Activated T-helper 1 cell treated with anti-CD3 and anti-CD28 coated beads, Interleukin-12 subunit alpha, Interleukin-12 subunit beta, Interleukin-2, Interleukin-4 antibody, amounts not matched to agents 30 ng/mL and 10 ng/mL and 1 ng/mL, durations not matched to agents 14 hours and 24 hours and 36 hours (primary cell): ENCODE measurements at regions of chr11 and their contacts with region 1.

Region 1: GRCh38 chr11:124673333-124674167 is at the starts of genes SIAE and SPA17:
- DNase-seq: peak; percentile 86
- H3K4me3 Mint-ChIP-seq: peak within 1 kb of the TSS; percentile 89
- H3K27ac Mint-ChIP-seq: peak within 1 kb of the TSS; percentile 89
- H3K4me1 Mint-ChIP-seq: peaks cover 29% of the 10 kb centered on the region
- H3K27me3 Mint-ChIP-seq: peaks cover 5% of the 10 kb centered on the region
- total RNA-seq, gene SIAE: 4.9 and 5.2 TPM in 2 replicates
- total RNA-seq, gene SPA17: 1.7 and 2.4 TPM in 2 replicates

Region 2: DNA sequence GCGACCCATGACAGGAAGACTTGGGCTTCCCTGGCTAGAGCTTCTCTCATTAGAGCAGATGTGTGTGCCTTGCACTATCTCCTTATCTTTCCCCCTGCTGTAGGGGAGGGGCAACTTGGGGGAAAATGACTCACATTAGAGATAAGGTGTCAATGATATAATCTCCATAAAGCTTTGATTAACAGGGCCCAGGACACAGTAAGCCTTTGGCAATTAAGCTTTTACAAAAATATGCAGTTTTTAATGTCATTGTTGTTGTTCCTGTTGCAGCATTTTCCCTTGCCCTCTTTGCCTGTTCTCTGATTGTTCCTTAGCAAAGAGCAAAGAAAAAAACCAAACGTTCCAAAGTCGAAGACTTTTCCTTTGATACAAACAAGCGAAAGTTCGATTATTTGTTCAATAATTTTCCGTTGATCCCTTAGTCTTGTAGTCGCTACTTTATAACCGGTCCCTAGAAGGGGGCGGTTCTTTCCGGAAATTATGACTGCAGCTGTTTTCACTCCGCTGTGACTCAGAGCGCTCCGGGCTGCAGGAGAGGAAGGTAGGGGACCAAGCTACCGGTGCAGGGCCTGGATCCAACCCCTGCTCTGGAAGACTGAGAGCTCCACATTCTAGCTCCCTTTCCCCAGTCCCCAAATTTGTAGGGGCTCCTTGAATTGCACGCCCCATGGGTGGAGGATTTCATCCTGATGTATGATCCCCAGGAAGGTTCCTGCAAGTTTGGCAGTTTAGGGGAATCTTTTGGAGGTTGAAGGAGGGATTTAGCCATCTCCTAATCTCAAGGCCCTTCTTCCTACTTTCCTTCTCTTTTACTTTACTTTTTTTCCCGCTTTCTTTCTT is 558.4 kb before region 1 on chr11 and contains the start of gene VWA5A:
- intact Hi-C with region 1: loop called (anchors 5 kb)
- DNase-seq: peak; percentile 71
- H3K4me3 Mint-ChIP-seq: peak within 1 kb of the TSS; percentile 94
- H3K27ac Mint-ChIP-seq: peak within 1 kb of the TSS; percentile 92
- H3K4me1 Mint-ChIP-seq: peaks cover 34% of the 10 kb centered on the region
- H3K27me3 Mint-ChIP-seq: peaks cover 7% of the 10 kb centered on the region
- total RNA-seq, gene VWA5A: 7.9 and 8.0 TPM in 2 replicates

Region 3: DNA sequence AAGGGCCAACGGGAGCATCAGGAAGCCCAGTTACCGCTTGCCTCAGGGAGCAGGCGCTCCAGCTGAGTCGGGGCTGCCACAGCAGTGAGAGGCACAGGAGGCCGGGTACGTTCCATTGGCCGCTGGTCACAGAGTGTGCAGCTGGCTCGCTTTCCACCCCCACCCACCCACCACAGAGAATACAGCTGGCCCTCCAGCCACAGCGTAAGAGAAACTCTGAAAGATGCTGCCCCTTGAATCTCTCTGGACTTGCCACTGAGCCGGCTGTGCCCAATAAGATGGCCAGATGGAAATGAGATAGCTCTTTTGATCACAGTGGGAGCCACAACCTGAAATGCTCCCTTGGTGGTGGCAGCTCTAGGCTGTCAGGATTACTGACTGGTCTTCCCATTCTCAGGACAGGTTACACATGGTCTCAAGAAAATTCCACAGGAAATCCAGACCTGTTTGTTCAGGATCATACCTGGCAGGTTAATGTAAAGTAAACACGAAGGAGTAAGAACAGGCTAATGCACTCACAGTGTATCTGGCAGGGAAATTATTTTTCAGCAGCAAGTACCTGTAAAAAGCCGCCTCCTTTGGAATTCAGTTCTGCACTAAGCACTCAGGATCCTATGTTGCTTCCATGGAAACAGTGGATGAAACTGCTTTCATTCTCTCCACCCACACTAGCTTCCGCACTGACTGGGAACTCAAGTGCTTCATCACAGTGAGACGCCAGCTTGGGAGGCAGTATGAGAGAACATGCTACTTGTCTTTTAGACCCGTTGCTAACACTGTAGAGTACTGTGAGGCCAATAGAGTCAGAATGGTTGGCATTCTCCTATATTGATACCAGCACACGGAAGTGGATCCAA is 16.5 kb before region 1 on chr11:
- intact Hi-C with region 1: no loop called
- DNase-seq: no peak
- H3K4me3 Mint-ChIP-seq: no peak overlapping the region
- H3K27ac Mint-ChIP-seq: no peak overlapping the region
- H3K4me1 Mint-ChIP-seq: no peaks in the 10 kb centered on the region
- H3K27me3 Mint-ChIP-seq: no peaks in the 10 kb centered on the region

Region 4: DNA sequence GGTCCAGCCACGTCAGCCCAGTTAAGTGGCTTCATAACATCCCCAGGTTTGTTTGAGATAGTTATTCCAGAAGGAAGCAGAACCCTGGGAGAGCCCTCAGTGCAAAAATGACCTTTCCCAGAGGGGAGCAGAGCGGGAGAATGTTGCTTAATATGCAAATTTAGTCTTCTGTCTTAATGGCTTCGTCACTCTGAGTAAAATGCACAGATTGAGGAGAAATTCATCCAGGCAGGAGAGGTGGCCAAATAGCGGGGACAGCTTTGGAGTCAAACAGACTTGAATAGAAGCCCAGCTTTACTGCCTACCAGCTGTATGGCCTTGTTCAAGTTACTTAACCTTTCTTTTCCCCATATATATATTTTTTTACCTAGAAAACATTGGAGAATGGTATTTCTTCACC is 53.9 kb after region 1 on chr11:
- intact Hi-C with region 1: no loop called
- DNase-seq: no peak
- H3K4me3 Mint-ChIP-seq: no peak overlapping the region
- H3K27ac Mint-ChIP-seq: no peak overlapping the region
- H3K4me1 Mint-ChIP-seq: no peaks in the 10 kb centered on the region
- H3K27me3 Mint-ChIP-seq: peaks cover 15% of the 10 kb centered on the region

Region 5: GRCh38 chr11:124739479-124740276 is 66.1 kb after region 1 on chr11 and contains the start of gene NRGN:
- intact Hi-C with region 1: loop called (anchors 1 kb)
- DNase-seq: peak; percentile 80
- H3K4me3 Mint-ChIP-seq: peak within 1 kb of the TSS; percentile 85
- H3K27ac Mint-ChIP-seq: peak within 1 kb of the TSS; percentile 54
- H3K4me1 Mint-ChIP-seq: peaks cover 25% of the 10 kb centered on the region
- H3K27me3 Mint-ChIP-seq: peaks cover 38% of the 10 kb centered on the region
- total RNA-seq, gene NRGN: 3.9 and 6.1 TPM in 2 replicates

Region 6: DNA sequence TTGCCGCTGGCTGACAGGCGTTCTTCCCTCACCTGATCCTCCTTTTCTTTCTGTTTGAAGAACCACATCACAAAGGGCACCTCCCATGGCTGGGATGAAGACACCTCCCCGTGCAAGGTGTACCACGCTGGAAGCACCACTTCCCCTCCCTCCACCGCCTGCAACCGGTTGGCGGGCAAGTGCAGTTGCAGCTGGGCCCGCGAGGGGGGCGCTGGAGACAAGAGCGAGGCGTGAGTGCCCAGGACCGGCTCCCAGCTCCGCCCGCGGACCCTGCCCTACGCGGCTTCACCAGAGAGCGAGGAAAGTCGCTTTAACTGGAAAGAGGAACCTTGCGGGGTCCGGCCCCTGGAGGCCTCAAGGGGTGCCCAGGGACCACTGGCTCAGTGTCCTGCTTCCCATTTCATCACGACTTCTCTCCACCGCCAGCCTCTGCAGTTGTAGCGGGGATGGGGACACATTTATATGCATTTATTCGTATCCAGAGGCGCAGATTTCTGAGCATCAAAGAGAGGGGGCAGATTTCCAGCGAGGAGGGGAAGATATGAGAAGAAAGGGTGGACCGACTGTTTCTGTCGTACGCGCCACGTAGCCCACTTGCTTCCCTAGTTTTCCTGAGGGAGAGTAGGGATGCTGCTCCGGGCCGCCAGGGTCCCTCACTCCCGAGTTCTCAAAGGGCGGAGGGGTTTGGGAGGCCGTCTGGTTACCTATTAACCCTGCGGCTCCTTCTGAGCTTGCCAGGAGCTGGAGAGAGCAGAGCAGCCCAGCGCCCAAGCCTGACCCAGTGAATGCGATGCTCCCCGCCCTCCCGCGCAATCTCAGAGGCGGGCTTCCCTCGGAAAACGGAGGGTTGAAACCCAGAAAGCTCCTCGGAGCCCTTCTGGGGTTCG is 85.0 kb after region 1 on chr11:
- intact Hi-C with region 1: loop called (anchors 1 kb)
- DNase-seq: peak; percentile 59
- H3K4me3 Mint-ChIP-seq: peak overlapping the region; percentile 61
- H3K27ac Mint-ChIP-seq: no peak overlapping the region
- H3K4me1 Mint-ChIP-seq: peaks cover 19% of the 10 kb centered on the region
- H3K27me3 Mint-ChIP-seq: peaks cover 57% of the 10 kb centered on the region

Region 7: DNA sequence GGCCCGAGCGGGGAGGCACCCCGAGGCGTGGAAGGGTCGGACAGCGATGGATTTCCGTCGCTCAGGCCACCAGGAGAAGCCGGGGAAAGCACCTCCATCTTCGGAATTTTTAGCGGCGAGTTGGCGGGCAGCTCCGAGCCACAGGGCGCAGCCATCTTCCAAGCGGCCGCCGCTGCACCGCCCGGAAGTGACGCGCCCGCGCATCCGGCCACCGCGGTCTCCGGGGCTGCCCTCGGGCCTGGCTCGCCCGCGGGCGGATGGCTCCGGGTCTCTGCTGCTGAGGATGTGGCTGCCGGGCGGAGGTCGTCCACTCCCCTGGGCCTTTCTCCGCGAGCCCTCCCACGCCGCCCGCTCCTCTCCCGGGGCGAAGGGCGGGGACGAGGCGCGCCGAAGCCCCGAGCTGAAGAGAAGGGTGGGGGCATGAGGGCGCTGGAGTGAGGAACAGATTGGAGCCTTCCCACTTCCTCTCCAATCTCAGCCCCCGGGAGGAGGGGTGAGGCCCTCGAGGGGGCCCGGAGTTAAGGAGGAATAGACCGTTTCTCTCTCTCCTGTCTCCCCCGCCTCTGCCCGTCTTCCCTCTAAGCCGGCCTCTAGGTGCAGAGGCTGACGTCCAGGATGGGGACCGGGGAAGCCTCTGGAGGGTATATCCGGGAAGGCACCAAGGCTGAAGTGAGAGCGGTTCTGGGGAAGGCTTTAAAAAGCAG is 126.8 kb after region 1 on chr11 and contains the start of gene MSANTD2:
- intact Hi-C with region 1: loop called (anchors 1 kb)
- DNase-seq: peak; percentile 79
- H3K4me3 Mint-ChIP-seq: peak within 1 kb of the TSS; percentile 91
- H3K27ac Mint-ChIP-seq: peak within 1 kb of the TSS; percentile 92
- H3K4me1 Mint-ChIP-seq: peaks cover 28% of the 10 kb centered on the region
- H3K27me3 Mint-ChIP-seq: peaks cover 8% of the 10 kb centered on the region
- total RNA-seq, gene MSANTD2: 8.9 and 9.7 TPM in 2 replicates

Region 8: DNA sequence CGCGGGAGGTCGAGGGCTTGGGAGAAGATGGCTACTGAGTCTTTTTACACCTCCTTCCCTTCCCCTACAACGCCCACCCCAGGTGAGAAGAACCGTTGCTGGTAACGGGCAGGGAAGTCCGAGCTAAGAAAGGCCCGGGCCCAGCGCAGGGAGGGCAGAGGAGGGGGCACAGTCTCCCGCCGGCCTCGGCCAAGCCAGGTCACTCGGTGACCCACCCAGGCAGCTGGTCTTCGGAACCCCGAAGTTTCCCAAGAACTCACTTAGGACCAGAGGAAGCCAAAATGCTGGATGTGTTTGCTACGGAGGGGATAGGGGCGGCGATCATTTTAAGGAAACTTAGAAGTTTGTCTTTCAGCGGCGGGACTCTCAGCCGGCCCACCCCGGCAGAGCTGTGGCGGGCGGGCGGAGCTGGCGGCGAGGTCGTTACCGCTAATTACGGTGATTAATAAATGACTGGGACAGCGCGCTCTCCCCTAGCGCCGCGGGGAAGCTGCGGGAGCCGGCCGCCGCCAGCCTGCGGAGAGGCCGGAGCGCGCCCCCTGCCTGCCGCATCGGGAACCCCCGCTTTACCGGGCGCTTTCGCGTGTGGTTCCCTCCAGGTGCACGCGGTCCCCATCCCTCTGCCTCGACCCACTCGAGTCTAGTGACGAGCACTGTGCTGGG is 192.5 kb after region 1 on chr11:
- intact Hi-C with region 1: loop called (anchors 2 kb)
- DNase-seq: peak; percentile 28
- H3K4me3 Mint-ChIP-seq: no peak overlapping the region
- H3K27ac Mint-ChIP-seq: no peak overlapping the region
- H3K4me1 Mint-ChIP-seq: peaks cover 16% of the 10 kb centered on the region
- H3K27me3 Mint-ChIP-seq: peaks cover 88% of the 10 kb centered on the region

Region 9: DNA sequence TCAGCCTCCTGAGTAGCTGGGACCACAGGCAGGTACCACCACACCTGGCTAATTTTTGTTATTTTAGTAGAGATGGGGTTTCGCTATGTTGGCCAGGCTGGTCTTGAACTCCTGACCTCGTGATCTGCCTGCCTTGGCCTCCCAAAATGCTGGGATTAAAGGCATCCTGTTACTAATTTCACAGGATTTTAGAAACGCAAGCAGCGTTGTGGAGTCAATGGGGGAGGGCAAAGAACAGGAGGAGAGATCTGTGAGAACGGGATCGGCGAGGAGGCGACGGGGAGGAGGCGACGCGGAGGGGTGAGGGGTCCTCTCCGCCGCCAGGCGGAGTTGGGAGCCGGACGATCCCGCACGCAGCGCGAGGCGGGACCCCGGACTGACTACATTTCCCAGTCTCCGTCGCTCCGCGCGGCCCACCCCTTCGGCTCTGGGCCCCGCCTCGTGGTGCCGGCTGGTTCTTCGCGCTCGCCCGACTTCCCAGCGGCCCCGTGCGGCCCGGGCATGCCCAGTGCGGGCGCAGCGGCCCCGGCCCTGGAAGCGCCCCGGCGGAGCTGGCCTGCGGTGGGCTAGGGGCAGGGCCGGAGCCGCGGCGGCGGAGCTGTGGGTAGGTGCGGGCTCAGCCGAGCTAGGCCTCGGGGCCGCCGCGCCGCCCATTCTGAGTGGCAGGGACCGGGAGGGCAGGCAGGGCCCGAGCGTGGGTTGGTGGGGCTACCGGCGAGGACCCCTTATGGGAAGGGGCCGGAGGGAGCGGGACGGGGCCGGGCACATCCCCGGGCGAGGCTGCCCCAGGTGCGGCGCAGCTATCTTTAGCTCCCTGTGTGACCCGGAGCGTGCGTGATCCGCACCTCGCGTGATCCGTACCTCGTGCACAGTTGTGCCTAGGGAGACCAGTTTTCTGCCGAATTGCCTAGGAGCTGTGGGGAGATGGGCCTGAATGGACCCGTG is 895.7 kb after region 1 on chr11 and contains the start of gene EI24:
- intact Hi-C with region 1: loop called (anchors 10 kb)
- DNase-seq: peak; percentile 88
- H3K4me3 Mint-ChIP-seq: peak within 1 kb of the TSS; percentile 95
- H3K27ac Mint-ChIP-seq: peak within 1 kb of the TSS; percentile 94
- H3K4me1 Mint-ChIP-seq: peaks cover 23% of the 10 kb centered on the region
- H3K27me3 Mint-ChIP-seq: no peaks in the 10 kb centered on the region
- total RNA-seq, gene EI24: 61.6 and 62.4 TPM in 2 replicates